Dorsolateral prefrontal cortex (tissue), 120 donors: ENCODE measurements at regions of chr20 and their contacts with region 1.

Region 1: GRCh38 chr20:18137412-18138265 is at the starts of genes KAT14 and PET117:
- DNase-seq: peak; percentile 77 to 95 (median 83)
- H3K4me3 ChIP-seq: peak within 1 kb of the TSS; percentile 73 to 100 (median 96)
- H3K27ac ChIP-seq: peak within 1 kb of the TSS; percentile 57 to 98 (median 93)
- H3K27me3 ChIP-seq: no peaks in the 10 kb centered on the region
- CTCF ChIP-seq: peak in 36 of 56 donors; percentile 4 to 61 (median 30)
- total RNA-seq, gene KAT14: 15.4 to 35.2 (median 26.2) TPM
- total RNA-seq, gene PET117: 9.7 to 30.3 (median 19.4) TPM

Region 2: GRCh38 chr20:18287915-18288748 is 150.5 kb after region 1 on chr20 and contains the start of gene ZNF133:
- intact Hi-C with region 1: loop called (anchors 1 to 5 kb)
- DNase-seq: peak; percentile 94 to 98 (median 96)
- H3K4me3 ChIP-seq: peak within 1 kb of the TSS; percentile 65 to 99 (median 90)
- H3K27ac ChIP-seq: peak within 1 kb of the TSS; percentile 88 to 100 (median 98)
- H3K27me3 ChIP-seq: peaks cover 0 to 5% (median 0%) of the 10 kb centered on the region in 45 donors
- CTCF ChIP-seq: peak in 44 of 56 donors; percentile 2 to 62 (median 38)
- total RNA-seq, gene ZNF133: 14.6 to 30.7 (median 23.0) TPM